ENCODE measurements at regions of chr12 and their contacts with region 1.

Region 1: GRCh38 chr12:89461649-89462612 is 62.7 kb downstream of the GALNT4 start:
- DNase-seq: no peak
- ATAC-seq: peak; percentile 84 to 96 (median 94)
- H3K4me3 ChIP-seq: no peak overlapping the region
- H3K27ac ChIP-seq: no peak overlapping the region
- H3K4me1 ChIP-seq: no peaks in the 10 kb centered on the region
- H3K27me3 ChIP-seq: no peaks in the 10 kb centered on the region
- CTCF ChIP-seq: peak; percentile 12 to 52 (median 34)

Region 2: GRCh38 chr12:89040146-89040964 is 421.6 kb before region 1 on chr12:
- intact Hi-C with region 1: loop called in 1 of 3 experiments (anchors 10 kb)
- DNase-seq: no peak
- ATAC-seq: no peak
- H3K4me3 ChIP-seq: no peak overlapping the region
- H3K27ac ChIP-seq: no peak overlapping the region
- H3K4me1 ChIP-seq: no peaks in the 10 kb centered on the region
- H3K27me3 ChIP-seq: no peaks in the 10 kb centered on the region
- CTCF ChIP-seq: no peak

Region 3: GRCh38 chr12:89051065-89051677 is 410.8 kb before region 1 on chr12:
- intact Hi-C with region 1: loop called in 2 of 3 experiments (anchors 5 to 10 kb)
- DNase-seq: peak in 2 of 6 donors; percentile 9 to 39
- ATAC-seq: peak; percentile 78 to 91 (median 90)
- H3K4me3 ChIP-seq: no peak overlapping the region
- H3K27ac ChIP-seq: no peak overlapping the region
- H3K4me1 ChIP-seq: no peaks in the 10 kb centered on the region
- H3K27me3 ChIP-seq: no peaks in the 10 kb centered on the region
- CTCF ChIP-seq: peak; percentile 77 to 98 (median 87)

Region 4: DNA sequence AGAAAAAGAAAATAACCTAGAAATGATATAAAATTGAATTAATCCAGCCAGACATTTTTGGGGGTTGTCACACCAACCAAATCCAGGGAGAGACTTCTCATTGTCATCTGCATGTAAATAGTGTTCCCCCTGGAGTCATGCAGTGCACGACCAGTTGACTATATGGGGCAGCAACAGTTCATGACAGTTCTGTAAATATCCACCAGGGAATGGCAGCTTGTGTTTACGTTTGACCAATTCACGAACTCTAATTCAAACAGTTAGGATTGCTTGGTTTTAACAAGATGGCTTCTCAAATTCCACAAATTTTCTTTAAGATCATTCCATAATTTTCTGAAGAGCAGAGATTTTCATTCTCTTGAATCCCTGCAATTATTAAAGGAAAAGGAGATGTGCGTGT is 66.2 kb before region 1 on chr12:
- intact Hi-C with region 1: no loop called
- DNase-seq: no peak
- ATAC-seq: no peak
- H3K4me3 ChIP-seq: no peak overlapping the region
- H3K27ac ChIP-seq: no peak overlapping the region
- H3K4me1 ChIP-seq: peaks cover 0 to 6% (median 5%) of the 10 kb centered on the region in 3 donors
- H3K27me3 ChIP-seq: no peaks in the 10 kb centered on the region
- CTCF ChIP-seq: no peak